Natural killer cell (primary cell): ENCODE measurements at regions of chr6 and their contacts with region 1.

Region 1: GRCh38 chr6:151390276-151391032 is 905 bp downstream of the ZBTB2 start:
- DNase-seq: peak; percentile 96 to 99
- ATAC-seq: peak; percentile 74 to 92 (median 75)
- H3K4me3 ChIP-seq: peak overlapping the region; percentile 70
- H3K4me3 Mint-ChIP-seq: peak overlapping the region; percentile 95
- H3K27ac ChIP-seq: peak overlapping the region; percentile 95
- H3K27ac Mint-ChIP-seq: peak overlapping the region; percentile 95 to 99
- H3K4me1 ChIP-seq: peaks cover 36% of the 10 kb centered on the region
- H3K4me1 Mint-ChIP-seq: peaks cover 52% of the 10 kb centered on the region in 2 donors
- H3K27me3 ChIP-seq: no peaks in the 10 kb centered on the region
- H3K27me3 Mint-ChIP-seq: no peaks in the 10 kb centered on the region
- CTCF ChIP-seq: no peak

Region 2: DNA sequence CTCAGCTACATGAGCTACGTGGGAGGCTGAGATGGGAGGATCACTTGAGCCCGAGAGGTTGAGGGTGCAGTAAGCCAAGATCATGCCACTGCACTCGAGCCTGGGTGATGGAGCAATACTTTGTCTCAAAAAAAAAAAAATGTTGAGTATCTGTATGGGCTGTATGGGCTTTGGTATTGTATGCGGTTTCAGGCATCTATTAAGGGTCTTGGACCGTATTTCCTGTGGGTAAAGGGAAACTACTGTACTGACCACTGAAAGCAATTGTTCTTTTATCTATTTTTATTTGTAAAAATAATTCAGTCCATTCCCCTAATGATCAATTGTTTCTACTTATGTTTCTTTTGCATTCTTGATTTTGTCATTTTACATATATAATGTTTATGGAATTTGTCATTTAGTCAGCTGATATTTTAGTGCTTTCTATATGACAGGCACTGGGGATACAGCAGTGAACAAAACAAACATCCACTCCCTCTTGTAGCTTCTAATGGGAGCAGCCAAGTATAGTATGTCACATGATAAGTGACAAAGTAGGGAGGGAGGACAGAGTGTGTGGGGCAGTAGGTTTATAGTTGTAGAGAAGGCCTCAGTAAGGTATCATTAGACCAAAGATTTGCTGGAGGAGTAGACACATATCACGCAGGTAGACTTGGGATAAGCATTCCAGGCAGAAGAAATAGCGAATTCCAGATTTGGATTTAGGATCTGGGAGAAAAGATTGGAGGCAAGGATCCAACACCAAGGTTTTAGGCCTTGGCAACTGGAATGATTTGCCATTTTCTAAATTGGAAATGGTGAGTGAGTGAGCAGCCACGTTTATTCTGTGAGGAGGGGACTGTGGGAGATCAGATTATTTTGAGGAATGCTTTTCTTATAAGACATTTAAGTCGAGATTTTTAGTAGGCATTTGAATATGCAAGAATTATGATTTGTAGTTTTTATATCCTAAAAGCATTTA is 1634.9 kb before region 1 on chr6:
- intact Hi-C with region 1: no loop called
- DNase-seq: no peak
- ATAC-seq: no peak
- H3K4me3 ChIP-seq: no peak overlapping the region
- H3K4me3 Mint-ChIP-seq: no peak overlapping the region
- H3K27ac ChIP-seq: no peak overlapping the region
- H3K27ac Mint-ChIP-seq: peak overlapping the region; percentile 4 to 60
- H3K4me1 ChIP-seq: peaks cover 6% of the 10 kb centered on the region
- H3K4me1 Mint-ChIP-seq: peaks cover 10 to 18% of the 10 kb centered on the region in 2 donors
- H3K27me3 ChIP-seq: no peaks in the 10 kb centered on the region
- H3K27me3 Mint-ChIP-seq: no peaks in the 10 kb centered on the region
- CTCF ChIP-seq: no peak

Region 3: GRCh38 chr6:151370509-151371078 is 19.9 kb before region 1 on chr6:
- intact Hi-C with region 1: loop called (anchors 1 kb)
- DNase-seq: no peak
- ATAC-seq: no peak
- H3K4me3 ChIP-seq: no peak overlapping the region
- H3K4me3 Mint-ChIP-seq: no peak overlapping the region
- H3K27ac ChIP-seq: no peak overlapping the region
- H3K27ac Mint-ChIP-seq: peak overlapping the region; percentile 92 to 95
- H3K4me1 ChIP-seq: peaks cover 41% of the 10 kb centered on the region
- H3K4me1 Mint-ChIP-seq: peaks cover 44 to 46% of the 10 kb centered on the region in 2 donors
- H3K27me3 ChIP-seq: no peaks in the 10 kb centered on the region
- H3K27me3 Mint-ChIP-seq: no peaks in the 10 kb centered on the region
- CTCF ChIP-seq: no peak

Region 4: DNA sequence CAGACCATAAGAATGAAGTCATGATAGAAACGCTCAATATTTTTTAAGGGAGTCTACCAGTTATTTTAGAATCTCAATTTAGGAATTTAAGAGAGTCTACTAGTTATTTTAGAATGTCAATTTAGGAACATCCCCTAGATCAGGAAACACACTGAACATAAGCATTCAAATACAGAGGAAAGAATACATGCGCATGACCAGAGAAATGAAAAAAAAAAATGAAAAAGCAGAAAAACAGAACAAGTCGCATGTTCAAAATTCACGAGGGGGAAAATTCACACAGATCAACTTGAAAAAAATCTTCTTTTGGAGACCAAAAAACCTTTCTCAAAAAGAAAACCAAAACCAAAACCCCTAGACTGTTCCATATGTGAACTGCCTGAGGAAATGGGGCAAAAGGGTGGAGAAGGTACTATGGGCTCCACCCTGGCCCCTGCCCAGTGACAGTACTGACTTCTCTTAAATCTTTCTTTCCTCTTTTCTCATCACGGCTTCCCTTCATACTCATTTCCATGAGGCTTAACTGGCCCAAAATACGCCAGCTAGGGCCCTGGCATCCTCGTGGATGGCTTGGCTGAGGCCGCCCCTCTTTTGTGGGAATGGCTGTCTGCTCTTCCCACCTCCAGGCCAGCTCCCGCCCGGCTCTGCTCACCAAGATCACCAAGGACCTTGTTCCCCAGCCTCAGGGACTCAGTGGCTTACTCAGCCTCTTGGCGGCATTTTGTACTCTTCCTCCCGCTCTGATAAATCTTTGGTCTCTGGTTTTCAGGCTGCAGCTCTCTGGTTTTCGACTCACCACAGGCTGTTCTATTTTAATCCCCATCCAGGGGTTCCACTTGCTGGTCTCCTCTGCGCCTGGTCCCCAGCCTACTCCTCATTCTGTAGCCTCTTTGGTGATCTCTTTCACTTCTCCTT is 10.3 kb before region 1 on chr6:
- intact Hi-C with region 1: loop called (anchors 1 kb)
- DNase-seq: peak; percentile 30 to 66
- ATAC-seq: peak; percentile 76 to 88 (median 86)
- H3K4me3 ChIP-seq: peak overlapping the region; percentile 37
- H3K4me3 Mint-ChIP-seq: peak overlapping the region; percentile 86
- H3K27ac ChIP-seq: peak overlapping the region; percentile 96
- H3K27ac Mint-ChIP-seq: peak overlapping the region; percentile 94 to 95
- H3K4me1 ChIP-seq: peaks cover 28% of the 10 kb centered on the region
- H3K4me1 Mint-ChIP-seq: peaks cover 68 to 71% of the 10 kb centered on the region in 2 donors
- H3K27me3 ChIP-seq: no peaks in the 10 kb centered on the region
- H3K27me3 Mint-ChIP-seq: no peaks in the 10 kb centered on the region
- CTCF ChIP-seq: no peak